MCF 10A (cell line): ENCODE measurements at regions of chr9 and their contacts with region 1.

Region 1: DNA sequence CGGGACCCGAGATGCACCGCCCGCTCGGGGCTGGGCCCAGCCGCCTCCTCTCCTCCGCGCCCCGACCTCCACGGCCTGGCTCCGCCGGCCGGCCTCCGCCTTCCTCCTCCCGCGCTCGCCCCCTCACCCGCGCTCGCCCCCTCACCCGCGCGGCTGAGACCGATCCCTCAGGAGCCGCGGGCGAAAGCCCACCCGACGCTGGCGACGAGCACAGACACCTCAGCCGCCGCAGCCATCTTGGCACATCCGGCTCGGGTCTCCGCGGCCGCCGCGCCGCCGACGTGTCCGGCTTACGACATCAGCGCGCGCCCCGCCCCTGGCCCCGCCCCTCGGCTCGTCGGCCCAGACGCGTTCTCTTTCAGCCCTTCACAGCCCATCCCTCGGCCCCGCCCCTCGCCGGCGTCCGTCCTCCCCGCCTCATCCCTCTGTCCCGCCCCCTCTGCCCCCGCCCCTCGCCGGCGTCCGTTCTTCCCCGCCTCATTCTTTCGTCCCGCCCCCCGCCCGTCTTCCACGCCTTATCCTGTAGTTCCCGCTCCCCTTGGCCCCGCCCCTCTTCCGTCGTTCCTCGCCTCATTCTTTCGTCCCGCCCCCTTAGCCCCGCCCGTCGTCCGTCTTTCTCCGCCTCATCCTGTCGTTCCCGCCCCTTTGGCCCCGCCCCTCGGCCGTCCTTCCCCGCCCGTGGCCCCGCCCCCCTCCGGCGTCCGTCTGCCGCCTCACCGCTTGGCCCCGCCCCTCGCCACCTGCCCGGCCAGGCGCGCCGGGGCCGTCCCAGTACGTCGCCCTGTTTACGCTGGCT is at the start of gene SEC16A:
- DNase-seq: peak; percentile 98
- H3K4me3 Mint-ChIP-seq: peak within 1 kb of the TSS; percentile 98
- H3K27ac Mint-ChIP-seq: peak within 1 kb of the TSS; percentile 100
- H3K4me1 Mint-ChIP-seq: peaks cover 10% of the 10 kb centered on the region
- H3K27me3 Mint-ChIP-seq: no peaks in the 10 kb centered on the region
- CTCF ChIP-seq: no peak
- total RNA-seq, gene SEC16A: 85.8 and 88.8 TPM in 2 replicates

Region 2: GRCh38 chr9:136206602-136207275 is 276.3 kb before region 1 on chr9:
- CTCF ChIA-PET with region 1: no interaction called
- POLR2A ChIA-PET with region 1: no interaction called
- intact Hi-C with region 1: no loop called
- DNase-seq: no peak
- H3K4me3 Mint-ChIP-seq: no peak overlapping the region
- H3K27ac Mint-ChIP-seq: no peak overlapping the region
- H3K4me1 Mint-ChIP-seq: no peaks in the 10 kb centered on the region
- H3K27me3 Mint-ChIP-seq: peaks cover 11% of the 10 kb centered on the region
- CTCF ChIP-seq: no peak

Region 3: GRCh38 chr9:136372561-136373299 is 110.3 kb before region 1 on chr9:
- CTCF ChIA-PET with region 1: no interaction called
- POLR2A ChIA-PET with region 1: no interaction called
- intact Hi-C with region 1: no loop called
- DNase-seq: peak; percentile 30
- H3K4me3 Mint-ChIP-seq: no peak overlapping the region
- H3K27ac Mint-ChIP-seq: no peak overlapping the region
- H3K4me1 Mint-ChIP-seq: no peaks in the 10 kb centered on the region
- H3K27me3 Mint-ChIP-seq: no peaks in the 10 kb centered on the region
- CTCF ChIP-seq: no peak

Region 4: GRCh38 chr9:136400038-136400834 is 82.8 kb before region 1 on chr9 and contains the start of gene SNAPC4:
- CTCF ChIA-PET with region 1: no interaction called
- POLR2A ChIA-PET with region 1: no interaction called
- intact Hi-C with region 1: no loop called
- DNase-seq: peak; percentile 84
- H3K4me3 Mint-ChIP-seq: peak within 1 kb of the TSS; percentile 81
- H3K27ac Mint-ChIP-seq: peak within 1 kb of the TSS; percentile 69
- H3K4me1 Mint-ChIP-seq: no peaks in the 10 kb centered on the region
- H3K27me3 Mint-ChIP-seq: no peaks in the 10 kb centered on the region
- CTCF ChIP-seq: peak; percentile 94
- total RNA-seq, gene SNAPC4: 9.6 and 9.9 TPM in 2 replicates

Region 5: GRCh38 chr9:136545966-136546698 is 63.1 kb after region 1 on chr9 and contains the start of gene NOTCH1:
- CTCF ChIA-PET with region 1: no interaction called
- POLR2A ChIA-PET with region 1: interaction called, 5 read pairs
- intact Hi-C with region 1: loop called (anchors 5 kb)
- DNase-seq: peak; percentile 94
- H3K4me3 Mint-ChIP-seq: peak within 1 kb of the TSS; percentile 76
- H3K27ac Mint-ChIP-seq: peak within 1 kb of the TSS; percentile 59
- H3K4me1 Mint-ChIP-seq: peaks cover 10% of the 10 kb centered on the region
- H3K27me3 Mint-ChIP-seq: no peaks in the 10 kb centered on the region
- CTCF ChIP-seq: no peak
- total RNA-seq, gene NOTCH1: 37.5 and 53.4 TPM in 2 replicates

Region 6: GRCh38 chr9:136631038-136632000 is 148.3 kb after region 1 on chr9:
- CTCF ChIA-PET with region 1: interaction called, 280 read pairs
- POLR2A ChIA-PET with region 1: interaction called, 84 read pairs
- intact Hi-C with region 1: loop called (anchors 1 kb)
- DNase-seq: peak; percentile 78
- H3K4me3 Mint-ChIP-seq: no peak overlapping the region
- H3K27ac Mint-ChIP-seq: no peak overlapping the region
- H3K4me1 Mint-ChIP-seq: peaks cover 11% of the 10 kb centered on the region
- H3K27me3 Mint-ChIP-seq: no peaks in the 10 kb centered on the region
- CTCF ChIP-seq: peak; percentile 82

Region 7: GRCh38 chr9:136790927-136791641 is 308.1 kb after region 1 on chr9 and contains the start of gene TMEM141:
- CTCF ChIA-PET with region 1: no interaction called
- POLR2A ChIA-PET with region 1: no interaction called
- intact Hi-C with region 1: no loop called
- DNase-seq: peak; percentile 99
- H3K4me3 Mint-ChIP-seq: peak within 1 kb of the TSS; percentile 81
- H3K27ac Mint-ChIP-seq: peak within 1 kb of the TSS; percentile 94
- H3K4me1 Mint-ChIP-seq: peaks cover 5% of the 10 kb centered on the region
- H3K27me3 Mint-ChIP-seq: no peaks in the 10 kb centered on the region
- CTCF ChIP-seq: no peak
- total RNA-seq, gene TMEM141: 56.0 and 70.4 TPM in 2 replicates